ENCODE measurements at regions of chr16 and their contacts with region 1.

Region 1: GRCh38 chr16:47416869-47417268 is 44.0 kb downstream of the ITFG1 start:
- DNase-seq: no peak
- H3K4me3 ChIP-seq: no peak overlapping the region
- H3K27ac ChIP-seq: no peak overlapping the region
- H3K4me1 ChIP-seq: no peaks in the 10 kb centered on the region
- H3K27me3 ChIP-seq: no peaks in the 10 kb centered on the region
- CTCF ChIP-seq: no peak
- EP300 ChIP-seq: no peak
- POLR2A ChIP-seq: no peak

Region 2: GRCh38 chr16:49281843-49282642 is 1865.2 kb after region 1 on chr16:
- in situ Hi-C with region 1: no loop called
- intact Hi-C with region 1: loop called (anchors 5 kb)
- DNase-seq: peak; percentile 91
- H3K4me3 ChIP-seq: peak overlapping the region in 3 of 4 donors; percentile 43 to 60 (median 48)
- H3K27ac ChIP-seq: peak overlapping the region; percentile 82 to 89 (median 87)
- H3K4me1 ChIP-seq: peaks cover 4 to 50% (median 28%) of the 10 kb centered on the region in 4 donors
- H3K27me3 ChIP-seq: peaks cover 92% of the 10 kb centered on the region
- CTCF ChIP-seq: peak; percentile 35 to 77 (median 48)
- EP300 ChIP-seq: no peak
- POLR2A ChIP-seq: peak; percentile 57